ENCODE measurements at regions of chr4 and their contacts with region 1.

Region 1: GRCh38 chr4:51836549-51836948 is 6.4 kb upstream of the DCUN1D4 start:
- DNase-seq: no peak
- ATAC-seq: no peak
- H3K4me3 ChIP-seq: no peak overlapping the region
- H3K27ac ChIP-seq: no peak overlapping the region
- H3K4me1 ChIP-seq: no peaks in the 10 kb centered on the region
- H3K27me3 ChIP-seq: no peaks in the 10 kb centered on the region

Region 2: DNA sequence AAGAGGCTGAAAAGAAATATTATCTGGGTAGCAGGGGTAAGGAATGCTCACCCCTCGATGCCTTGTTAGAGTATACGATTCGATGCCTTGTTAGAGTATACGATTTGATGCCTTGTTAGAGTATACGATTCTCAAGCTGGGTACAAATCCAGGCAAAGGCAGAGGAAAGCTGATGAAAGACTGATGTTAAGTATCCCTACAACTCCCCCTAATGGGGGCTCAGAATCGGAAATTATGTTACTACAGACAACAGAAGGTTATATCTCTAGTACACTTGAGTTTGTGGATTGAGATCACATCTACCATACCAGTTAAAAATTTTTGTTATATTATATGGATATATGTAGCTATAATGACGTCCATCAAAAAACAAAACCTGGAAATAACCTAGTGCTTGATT is 178.8 kb after region 1 on chr4:
- intact Hi-C with region 1: loop called in 1 of 4 experiments (anchors 5 kb)
- DNase-seq: no peak
- ATAC-seq: no peak
- H3K4me3 ChIP-seq: no peak overlapping the region
- H3K27ac ChIP-seq: no peak overlapping the region
- H3K4me1 ChIP-seq: no peaks in the 10 kb centered on the region
- H3K27me3 ChIP-seq: no peaks in the 10 kb centered on the region

Measured in right cardiac atrium (tissue), 5 donors.